ENCODE measurements at regions of chr20 and their contacts with region 1.

Region 1: DNA sequence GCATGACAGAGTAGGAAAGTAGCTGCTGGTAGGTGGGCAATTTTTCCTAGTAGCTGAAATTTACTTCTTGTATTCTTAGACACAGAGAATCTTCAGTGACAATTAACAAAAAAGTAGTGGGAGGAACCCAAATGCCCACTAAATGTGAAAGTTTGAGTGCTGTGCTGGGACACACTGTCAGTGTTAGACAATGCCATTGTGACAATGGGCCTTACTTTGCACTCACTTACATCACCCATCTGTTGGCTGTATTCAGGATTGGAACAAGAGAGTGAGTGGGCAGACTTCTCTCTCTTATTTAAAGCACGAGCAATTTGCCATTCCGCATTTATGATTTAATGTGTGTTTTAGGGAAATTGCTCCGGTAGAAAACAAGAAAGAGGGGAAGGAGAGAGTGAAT is 662.5 kb downstream of the CBLN4 start:
- DNase-seq: no peak
- H3K4me3 ChIP-seq: no peak overlapping the region
- H3K27ac ChIP-seq: no peak overlapping the region
- H3K4me1 ChIP-seq: no peaks in the 10 kb centered on the region
- H3K27me3 ChIP-seq: no peaks in the 10 kb centered on the region
- CTCF ChIP-seq: no peak

Region 2: DNA sequence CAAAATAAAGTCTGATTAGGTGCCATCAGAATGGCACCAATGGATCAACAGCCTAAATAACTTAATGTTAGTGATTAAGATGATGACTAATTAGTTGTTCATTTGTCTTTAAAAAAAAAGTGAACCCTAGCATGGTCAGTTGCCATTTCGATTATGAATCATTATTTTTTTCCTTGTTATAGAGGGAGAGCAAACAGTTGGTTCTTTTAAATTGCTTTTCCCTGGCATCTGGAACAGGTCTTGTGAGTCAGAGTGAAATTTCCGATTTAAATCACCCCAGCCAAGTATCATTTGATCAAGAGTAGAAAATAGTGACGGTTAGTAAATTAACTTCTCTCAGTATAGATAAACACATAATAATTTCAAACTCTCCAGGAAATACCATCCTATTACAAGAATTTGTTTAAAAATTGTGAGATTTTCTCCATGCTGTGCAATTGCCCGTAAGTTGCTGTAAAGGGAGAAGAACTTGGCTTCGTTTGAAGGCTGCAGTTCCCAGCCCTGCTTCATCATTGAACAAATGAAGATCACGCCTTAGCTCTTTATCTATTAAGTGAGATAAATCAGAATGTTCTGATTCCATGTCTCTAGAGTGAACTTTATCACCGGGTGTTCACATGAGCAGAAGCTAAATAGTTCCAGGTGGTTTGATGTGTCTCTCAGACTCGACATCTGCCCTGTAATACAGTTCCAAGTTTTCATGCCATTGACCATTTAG is 126.1 kb before region 1 on chr20:
- intact Hi-C with region 1: loop called (anchors 10 kb)
- DNase-seq: no peak
- H3K4me3 ChIP-seq: no peak overlapping the region
- H3K27ac ChIP-seq: no peak overlapping the region
- H3K4me1 ChIP-seq: no peaks in the 10 kb centered on the region
- H3K27me3 ChIP-seq: no peaks in the 10 kb centered on the region
- CTCF ChIP-seq: no peak

Region 3: DNA sequence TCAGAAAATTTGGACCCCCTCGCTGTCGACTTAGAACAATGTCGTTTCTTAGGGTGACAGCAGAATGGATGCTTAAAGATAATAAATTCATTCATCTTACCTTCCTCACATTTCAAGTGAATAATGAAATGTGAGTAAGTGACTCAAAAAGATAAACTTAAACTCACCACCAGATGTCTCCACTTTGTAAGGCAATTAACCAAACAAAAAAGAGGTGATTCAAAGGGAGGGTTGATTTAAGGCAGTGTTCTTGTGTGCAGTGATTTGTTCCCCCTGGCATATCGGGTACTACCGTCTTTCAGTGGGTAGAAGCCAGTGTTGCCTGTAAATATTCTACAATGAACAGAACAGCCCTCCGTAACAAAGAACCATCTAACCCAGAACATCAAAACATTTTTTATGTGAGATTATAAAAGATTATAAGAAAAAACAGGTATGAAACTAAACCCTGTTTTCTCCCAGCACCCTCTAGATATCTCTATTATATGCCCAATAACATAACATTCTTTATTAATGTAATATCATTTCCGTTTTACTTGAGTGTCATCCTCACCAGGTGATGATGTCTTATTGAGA is 72.8 kb after region 1 on chr20:
- intact Hi-C with region 1: no loop called
- DNase-seq: no peak
- H3K4me3 ChIP-seq: no peak overlapping the region
- H3K27ac ChIP-seq: no peak overlapping the region
- H3K4me1 ChIP-seq: no peaks in the 10 kb centered on the region
- H3K27me3 ChIP-seq: no peaks in the 10 kb centered on the region
- CTCF ChIP-seq: peak; percentile 44

Measured in left ventricle myocardium inferior (tissue), 1 donor.